ENCODE measurements at regions of chr7 and their contacts with region 1.

Region 1: GRCh38 chr7:43582503-43583423 is at the start of gene STK17A:
- DNase-seq: peak; percentile 97
- H3K4me3 Mint-ChIP-seq: peak within 1 kb of the TSS; percentile 95
- H3K27ac Mint-ChIP-seq: peak within 1 kb of the TSS; percentile 98
- H3K4me1 Mint-ChIP-seq: peaks cover 20% of the 10 kb centered on the region
- H3K27me3 Mint-ChIP-seq: peaks cover 5% of the 10 kb centered on the region
- total RNA-seq, gene STK17A: 58.2 to 62.6 TPM

Region 2: DNA sequence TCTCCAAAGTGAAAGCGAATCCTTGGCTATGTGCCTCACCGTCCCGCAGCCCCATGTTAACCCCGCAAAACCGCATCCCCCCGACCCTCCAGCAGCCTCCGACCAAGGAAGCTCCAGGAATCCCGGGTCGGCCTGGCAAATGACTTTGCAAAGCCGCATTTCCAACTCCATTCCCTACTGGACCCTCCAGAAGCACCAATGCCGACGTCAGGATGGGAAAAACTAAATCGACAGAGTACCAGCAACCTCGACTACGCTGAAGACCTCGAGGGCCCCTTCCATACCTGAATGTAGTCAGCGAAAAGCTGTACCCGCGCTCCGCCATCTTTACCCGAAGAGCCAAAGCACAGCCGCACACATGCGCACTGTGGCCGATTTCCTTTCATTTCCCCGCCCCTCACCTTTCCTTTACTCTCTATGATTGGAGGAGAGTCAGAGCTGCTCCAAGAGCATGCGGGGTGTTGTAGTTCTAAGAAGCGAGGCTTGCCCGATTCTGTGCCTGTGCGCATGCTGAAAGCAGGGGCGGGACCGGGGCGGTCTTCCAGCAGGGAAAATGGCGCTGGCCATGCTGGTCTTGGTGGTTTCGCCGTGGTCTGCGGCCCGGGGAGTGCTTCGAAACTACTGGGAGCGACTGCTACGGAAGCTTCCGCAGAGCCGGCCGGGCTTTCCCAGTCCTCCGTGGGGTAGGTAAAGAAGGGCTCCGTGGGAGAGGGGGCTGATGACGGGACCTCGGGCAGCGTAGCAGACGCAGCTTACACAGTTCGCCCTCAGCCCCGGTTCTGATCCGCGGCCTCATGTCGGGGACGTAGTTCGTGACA is 650.7 kb before region 1 on chr7 and contains the starts of genes MRPL32 and PSMA2:
- CTCF ChIA-PET with region 1: interaction called, 3 read pairs
- POLR2A ChIA-PET with region 1: interaction called, 6 read pairs
- intact Hi-C with region 1: loop called (anchors 10 kb)
- DNase-seq: peak; percentile 96
- H3K4me3 Mint-ChIP-seq: peak within 1 kb of the TSS; percentile 100
- H3K27ac Mint-ChIP-seq: peak within 1 kb of the TSS; percentile 100
- H3K4me1 Mint-ChIP-seq: peaks cover 60% of the 10 kb centered on the region
- H3K27me3 Mint-ChIP-seq: no peaks in the 10 kb centered on the region
- total RNA-seq, gene MRPL32: 59.3 to 63.6 TPM
- total RNA-seq, gene PSMA2: 196 to 200 TPM

Region 3: GRCh38 chr7:43625453-43625852 is 42.7 kb after region 1 on chr7:
- CTCF ChIA-PET with region 1: interaction called, 112 read pairs
- POLR2A ChIA-PET with region 1: interaction called, 11 read pairs
- intact Hi-C with region 1: loop called (anchors 1 kb)
- DNase-seq: peak; percentile 67
- H3K4me3 Mint-ChIP-seq: no peak overlapping the region
- H3K27ac Mint-ChIP-seq: peak overlapping the region; percentile 54
- H3K4me1 Mint-ChIP-seq: peaks cover 84% of the 10 kb centered on the region
- H3K27me3 Mint-ChIP-seq: no peaks in the 10 kb centered on the region

Region 4: GRCh38 chr7:43669286-43670081 is 86.7 kb after region 1 on chr7:
- CTCF ChIA-PET with region 1: interaction called, 41 read pairs
- POLR2A ChIA-PET with region 1: interaction called, 14 read pairs
- intact Hi-C with region 1: loop called (anchors 1 kb)
- DNase-seq: peak; percentile 96
- H3K4me3 Mint-ChIP-seq: peak overlapping the region; percentile 78
- H3K27ac Mint-ChIP-seq: peak overlapping the region; percentile 96
- H3K4me1 Mint-ChIP-seq: peaks cover 78% of the 10 kb centered on the region
- H3K27me3 Mint-ChIP-seq: no peaks in the 10 kb centered on the region

Region 5: GRCh38 chr7:43700059-43700501 is 117.3 kb after region 1 on chr7:
- CTCF ChIA-PET with region 1: interaction called, 548 read pairs
- POLR2A ChIA-PET with region 1: interaction called, 47 read pairs
- intact Hi-C with region 1: loop called (anchors 1 kb)
- DNase-seq: no peak
- H3K4me3 Mint-ChIP-seq: no peak overlapping the region
- H3K27ac Mint-ChIP-seq: no peak overlapping the region
- H3K4me1 Mint-ChIP-seq: peaks cover 57% of the 10 kb centered on the region
- H3K27me3 Mint-ChIP-seq: no peaks in the 10 kb centered on the region

Region 6: DNA sequence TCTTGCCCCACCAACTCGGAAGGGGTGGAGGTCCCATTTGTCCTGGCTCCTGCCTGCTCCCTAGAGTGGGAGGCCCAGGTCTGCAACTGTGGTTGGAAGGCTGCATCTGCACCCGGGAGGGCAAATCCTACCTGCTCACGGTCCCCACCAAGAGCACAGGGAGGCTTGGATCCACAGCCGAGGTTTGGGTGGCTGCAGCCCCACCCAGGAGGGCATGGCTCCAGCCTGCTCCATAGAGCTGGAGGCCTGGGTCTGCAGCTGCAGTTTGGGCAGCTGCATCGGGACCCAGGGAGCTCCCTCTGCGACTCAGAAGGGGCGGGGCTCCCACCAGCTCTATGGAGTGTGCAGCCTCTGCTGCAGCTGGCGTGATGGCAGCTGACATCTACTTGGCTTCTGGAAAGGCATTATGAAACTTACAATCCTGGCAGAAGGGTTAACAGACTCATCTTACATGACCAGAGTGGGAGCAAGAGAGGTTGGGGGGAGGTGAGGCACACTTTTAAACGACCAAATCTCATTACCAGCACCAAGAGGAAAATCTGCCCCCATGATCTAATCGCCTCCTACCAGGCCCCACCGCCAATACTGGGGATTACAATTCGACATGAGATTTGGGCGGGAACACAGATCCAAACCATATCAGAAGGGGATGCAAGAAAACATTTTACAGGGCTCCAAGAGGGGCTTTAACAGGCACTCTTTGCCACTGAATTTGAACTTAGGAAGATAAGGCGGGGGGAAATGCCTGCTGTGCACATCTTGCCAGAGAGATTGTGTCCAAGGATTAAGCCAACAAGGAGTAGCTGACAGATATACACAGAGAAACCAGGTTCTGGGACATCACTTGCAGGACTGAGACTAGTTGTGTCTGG is 167.5 kb after region 1 on chr7:
- CTCF ChIA-PET with region 1: interaction called, 12 read pairs
- POLR2A ChIA-PET with region 1: interaction called, 3 read pairs
- intact Hi-C with region 1: no loop called
- DNase-seq: no peak
- H3K4me3 Mint-ChIP-seq: no peak overlapping the region
- H3K27ac Mint-ChIP-seq: no peak overlapping the region
- H3K4me1 Mint-ChIP-seq: peaks cover 15% of the 10 kb centered on the region
- H3K27me3 Mint-ChIP-seq: peaks cover 10% of the 10 kb centered on the region

Region 7: DNA sequence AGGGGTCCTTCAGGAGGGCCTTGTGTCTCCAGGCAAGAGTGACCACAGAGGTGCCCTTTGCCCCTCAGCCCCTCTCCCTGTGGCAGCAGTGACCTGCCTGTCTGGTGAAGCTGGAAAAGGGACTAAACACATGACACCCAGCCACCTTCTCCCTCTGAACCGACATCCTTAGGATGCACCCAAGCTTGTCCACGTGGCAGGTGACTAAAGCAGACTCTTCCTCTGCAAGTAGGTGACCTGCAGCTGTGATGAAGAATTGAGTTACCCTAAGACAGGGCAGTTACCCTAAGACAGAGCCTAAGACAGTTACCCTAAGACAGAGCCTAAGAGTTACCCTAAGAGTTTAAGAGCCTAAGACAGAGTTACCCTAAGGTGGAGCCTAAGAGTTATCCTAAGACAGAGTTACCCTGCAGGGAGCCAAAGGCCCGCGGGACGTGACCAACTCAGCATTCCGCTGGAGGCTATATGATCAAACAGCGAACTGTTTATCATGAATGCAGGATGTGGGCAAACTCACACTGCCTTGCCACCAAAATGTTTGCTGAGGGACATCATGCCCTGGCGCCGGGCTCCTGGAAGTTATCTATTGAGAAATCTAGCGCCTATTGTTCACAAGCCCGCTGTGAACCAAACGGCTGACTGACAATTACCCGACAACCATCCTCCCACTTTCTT is 225.5 kb after region 1 on chr7:
- CTCF ChIA-PET with region 1: interaction called, 13 read pairs
- POLR2A ChIA-PET with region 1: no interaction called
- intact Hi-C with region 1: no loop called
- DNase-seq: no peak
- H3K4me3 Mint-ChIP-seq: no peak overlapping the region
- H3K27ac Mint-ChIP-seq: no peak overlapping the region
- H3K4me1 Mint-ChIP-seq: no peaks in the 10 kb centered on the region
- H3K27me3 Mint-ChIP-seq: peaks cover 4% of the 10 kb centered on the region